ENCODE measurements at regions of chr6 and their contacts with region 1.

Region 1: DNA sequence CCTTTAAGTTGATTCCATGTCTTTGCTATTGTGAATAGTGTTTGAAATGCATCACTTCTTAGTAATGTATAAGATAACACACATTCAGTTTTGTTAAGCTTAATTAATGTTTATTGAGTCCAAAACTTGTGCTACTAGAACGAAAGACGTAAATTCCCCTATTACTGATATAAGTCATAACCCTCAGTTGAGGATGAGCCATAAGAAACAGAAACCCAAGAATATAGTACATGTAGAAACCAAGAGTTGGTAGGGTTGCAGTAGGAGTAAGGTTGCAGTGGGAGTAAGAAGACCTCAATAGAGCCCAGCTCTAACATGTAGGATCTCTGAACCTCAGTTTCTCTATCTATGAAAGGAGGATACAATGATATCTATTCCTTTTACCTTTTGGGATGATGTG is 19.3 kb downstream of the CITED2 start:
- DNase-seq: no peak
- ATAC-seq: no peak
- H3K4me3 ChIP-seq: no peak overlapping the region
- H3K27ac ChIP-seq: no peak overlapping the region
- H3K4me1 ChIP-seq: no peaks in the 10 kb centered on the region
- H3K27me3 ChIP-seq: no peaks in the 10 kb centered on the region
- CTCF ChIP-seq: no peak

Region 2: GRCh38 chr6:138817822-138818308 is 537.3 kb before region 1 on chr6:
- intact Hi-C with region 1: loop called (anchors 10 kb)
- DNase-seq: peak; percentile 76
- ATAC-seq: peak; percentile 93
- H3K4me3 ChIP-seq: no peak overlapping the region
- H3K27ac ChIP-seq: peak overlapping the region; percentile 62
- H3K4me1 ChIP-seq: no peaks in the 10 kb centered on the region
- H3K27me3 ChIP-seq: no peaks in the 10 kb centered on the region
- CTCF ChIP-seq: no peak

Region 3: GRCh38 chr6:139271056-139271455 is 84.1 kb before region 1 on chr6:
- intact Hi-C with region 1: no loop called
- DNase-seq: no peak
- ATAC-seq: no peak
- H3K4me3 ChIP-seq: no peak overlapping the region
- H3K27ac ChIP-seq: no peak overlapping the region
- H3K4me1 ChIP-seq: no peaks in the 10 kb centered on the region
- H3K27me3 ChIP-seq: no peaks in the 10 kb centered on the region
- CTCF ChIP-seq: no peak

Measured in upper lobe of right lung (tissue), 1 donor.